ENCODE measurements at regions of chr1 and their contacts with region 1.

Region 1: DNA sequence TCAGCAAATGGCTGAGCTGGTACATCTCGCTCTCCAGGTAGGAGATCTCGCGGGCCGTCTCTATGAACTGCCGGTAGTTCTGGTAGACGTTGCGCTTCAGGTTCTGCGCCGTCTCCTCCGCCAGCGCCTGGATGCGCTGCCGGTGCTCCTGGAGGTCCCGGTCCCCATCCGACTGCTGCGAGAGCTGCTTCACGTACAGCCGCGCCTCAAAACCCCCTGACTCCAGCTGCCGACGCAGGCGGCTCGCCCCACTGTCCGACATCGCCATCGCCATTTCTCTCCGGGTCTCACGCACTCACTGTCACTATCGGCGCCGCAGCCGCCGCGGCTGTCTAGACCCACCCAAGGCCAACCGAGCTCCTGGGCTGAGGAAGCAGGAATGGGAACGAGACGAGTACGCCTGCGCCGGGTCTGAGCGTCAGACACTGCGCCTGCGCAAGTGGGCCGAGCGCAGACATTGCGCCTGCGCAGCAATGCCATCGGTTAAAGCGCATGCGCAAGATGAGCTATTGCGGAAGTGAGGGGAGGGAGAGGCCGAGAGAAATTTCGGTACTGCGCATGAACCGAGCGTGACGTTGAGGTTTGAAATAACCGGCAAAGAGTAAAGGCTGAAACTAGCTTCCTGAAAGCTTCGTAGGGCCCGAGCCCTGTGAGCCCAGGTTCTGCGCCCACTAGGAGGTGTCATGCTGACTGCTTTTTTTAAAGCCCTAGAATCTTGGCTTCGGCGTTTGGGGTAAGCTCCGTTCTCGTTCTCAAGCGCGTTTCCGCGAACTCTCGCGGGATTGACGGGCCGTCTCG is at the start of gene EXOC8:
- DNase-seq: peak; percentile 95
- ATAC-seq: peak; percentile 97
- total RNA-seq, gene EXOC8: 11.3 TPM

Region 2: DNA sequence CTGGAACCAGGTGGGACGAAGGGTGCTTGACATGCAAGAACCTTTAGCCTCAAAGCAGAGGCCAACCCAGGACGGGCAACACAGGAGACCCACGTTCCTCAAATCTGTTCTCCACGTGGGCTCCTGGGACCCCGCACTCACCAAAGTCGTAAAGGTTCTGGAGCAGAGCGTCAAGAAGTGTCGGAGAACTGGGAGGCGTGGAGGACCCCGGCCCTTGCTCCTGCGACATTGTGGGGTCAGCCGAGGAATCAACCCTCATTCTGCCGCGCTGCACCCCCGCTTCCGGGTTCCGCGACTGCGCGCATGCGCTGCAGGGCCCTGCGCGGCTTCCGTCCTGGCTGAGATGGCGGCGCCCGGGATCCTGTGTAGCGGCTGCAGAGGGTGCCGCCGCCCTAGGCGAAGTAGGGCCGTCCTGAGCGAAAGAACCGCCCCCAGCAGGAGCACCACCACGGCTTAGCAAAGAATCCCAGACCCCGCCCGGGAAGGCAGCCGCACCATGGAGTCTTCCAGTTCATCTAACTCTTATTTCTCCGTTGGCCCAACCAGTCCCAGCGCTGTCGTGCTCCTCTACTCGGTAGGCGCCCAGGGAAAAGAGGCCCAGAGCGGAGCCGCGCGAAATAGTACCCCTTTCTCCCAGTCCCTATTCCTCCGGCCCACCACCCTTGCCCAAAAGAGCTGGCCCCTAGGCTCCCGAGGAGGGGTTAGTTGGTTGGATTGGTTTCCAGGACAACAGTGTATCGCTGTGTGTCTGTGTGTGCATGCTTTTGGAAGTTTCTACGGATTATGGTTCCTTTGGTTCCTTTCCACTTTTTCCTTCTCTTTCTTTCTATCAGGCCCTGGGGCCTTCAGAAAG is 96.6 kb before region 1 on chr1 and contains the start of gene GNPAT:
- intact Hi-C with region 1: loop called (anchors 1 kb)
- DNase-seq: peak; percentile 96
- ATAC-seq: peak; percentile 98
- total RNA-seq, gene GNPAT: 59.1 TPM

Region 3: DNA sequence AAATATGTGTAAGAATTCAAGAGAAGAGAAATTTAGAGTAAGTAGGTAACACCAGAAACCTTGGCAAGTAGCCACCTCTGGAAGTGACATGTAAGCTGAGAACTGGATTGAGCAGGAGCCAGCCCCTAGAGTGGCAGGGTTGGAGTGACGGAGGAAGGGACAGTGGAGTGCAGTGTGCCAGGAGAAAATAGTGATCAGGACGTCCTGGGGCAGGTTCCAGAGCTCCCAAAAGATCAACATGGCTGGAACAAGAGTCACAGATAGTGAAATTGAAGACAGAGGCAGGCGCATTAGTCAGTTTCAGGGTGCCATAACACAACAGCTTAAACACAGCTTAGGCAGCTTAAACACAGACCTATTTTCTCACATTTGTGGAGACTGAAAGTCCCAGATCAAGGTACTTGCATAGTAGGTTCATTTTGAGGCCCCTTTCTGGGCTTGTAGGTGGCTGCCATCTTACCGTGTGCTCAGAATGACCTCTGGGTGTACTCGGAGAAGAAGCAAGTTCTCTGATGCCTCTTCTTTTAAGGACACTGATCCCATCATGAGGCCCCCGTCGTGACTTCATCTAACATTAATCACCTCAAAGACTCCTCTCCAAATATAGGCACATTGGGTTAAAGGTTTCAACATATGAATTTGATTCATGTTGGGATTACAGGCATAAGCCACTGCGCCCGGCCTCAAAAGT is 59.4 kb before region 1 on chr1:
- intact Hi-C with region 1: loop called (anchors 2 kb)
- DNase-seq: peak; percentile 81
- ATAC-seq: peak; percentile 95

Measured in Right ventricle myocardium inferior (tissue), 1 donor.